AG04449 (cell line): ENCODE measurements at regions of chr12 and their contacts with region 1.

Region 1: DNA sequence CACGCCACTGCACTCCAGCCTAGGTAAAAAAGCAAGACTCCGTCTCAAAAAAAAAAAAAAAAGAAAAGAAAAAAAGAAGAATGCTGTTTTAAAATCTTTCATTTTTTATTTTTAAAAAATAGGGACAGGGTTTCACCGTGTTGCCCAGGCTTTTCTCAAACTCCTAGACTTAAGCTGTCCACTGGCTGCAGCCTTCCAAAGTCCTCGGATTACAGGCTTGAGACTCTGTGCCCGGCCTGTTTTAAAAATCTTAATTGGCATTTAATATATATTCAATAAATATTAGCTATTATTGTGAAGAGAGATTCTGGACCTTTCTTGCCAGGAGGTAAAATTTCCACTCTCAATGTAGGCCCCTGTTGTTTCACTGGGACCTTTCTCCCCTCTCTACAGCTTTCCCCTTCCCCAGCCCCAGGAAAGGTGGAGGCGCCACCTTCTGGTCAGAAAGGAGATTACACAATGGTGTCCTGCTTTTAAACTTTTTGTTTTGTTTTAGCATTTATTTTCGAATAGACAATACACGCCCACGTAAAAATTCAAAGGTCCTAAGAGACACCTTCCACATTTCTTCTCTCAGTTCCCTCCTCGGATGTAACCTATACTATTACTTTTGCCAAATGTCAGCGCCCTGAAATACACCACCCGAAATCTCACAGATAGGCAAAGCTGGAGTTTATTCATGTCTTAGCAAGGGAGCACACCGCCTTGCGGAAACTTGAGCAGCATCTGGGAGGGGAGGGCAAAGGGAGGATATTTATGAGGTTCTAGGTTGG is 23.8 kb upstream of the PHC1 start:
- DNase-seq: no peak
- H3K4me3 ChIP-seq: peak overlapping the region; percentile 51
- CTCF ChIP-seq: peak; percentile 80

Region 2: DNA sequence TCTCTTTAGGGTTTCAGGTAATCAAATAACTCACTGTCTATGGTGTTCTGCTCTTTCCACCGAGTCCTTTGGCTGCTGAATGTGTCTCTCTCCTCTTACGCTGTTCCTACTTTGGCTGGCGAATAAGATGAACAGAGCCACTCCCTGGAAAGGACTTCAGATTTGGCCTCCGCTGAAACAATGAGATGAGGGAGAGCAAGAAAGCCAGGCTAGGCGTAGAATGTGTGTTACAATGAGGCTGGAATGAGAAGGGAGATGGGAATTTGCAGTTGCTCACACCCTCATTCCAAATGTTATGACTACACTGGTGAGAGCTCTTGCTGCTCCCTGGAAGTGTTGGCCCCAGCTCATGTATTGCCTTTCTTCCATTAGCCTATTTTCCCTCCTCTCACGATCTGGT is 227.9 kb before region 1 on chr12 and contains the start of gene MFAP5:
- CTCF ChIA-PET with region 1: interaction called, 97 read pairs
- POLR2A ChIA-PET with region 1: no interaction called
- DNase-seq: peak; percentile 38
- H3K4me3 ChIP-seq: peak within 1 kb of the TSS; percentile 18
- CTCF ChIP-seq: no peak

Region 3: DNA sequence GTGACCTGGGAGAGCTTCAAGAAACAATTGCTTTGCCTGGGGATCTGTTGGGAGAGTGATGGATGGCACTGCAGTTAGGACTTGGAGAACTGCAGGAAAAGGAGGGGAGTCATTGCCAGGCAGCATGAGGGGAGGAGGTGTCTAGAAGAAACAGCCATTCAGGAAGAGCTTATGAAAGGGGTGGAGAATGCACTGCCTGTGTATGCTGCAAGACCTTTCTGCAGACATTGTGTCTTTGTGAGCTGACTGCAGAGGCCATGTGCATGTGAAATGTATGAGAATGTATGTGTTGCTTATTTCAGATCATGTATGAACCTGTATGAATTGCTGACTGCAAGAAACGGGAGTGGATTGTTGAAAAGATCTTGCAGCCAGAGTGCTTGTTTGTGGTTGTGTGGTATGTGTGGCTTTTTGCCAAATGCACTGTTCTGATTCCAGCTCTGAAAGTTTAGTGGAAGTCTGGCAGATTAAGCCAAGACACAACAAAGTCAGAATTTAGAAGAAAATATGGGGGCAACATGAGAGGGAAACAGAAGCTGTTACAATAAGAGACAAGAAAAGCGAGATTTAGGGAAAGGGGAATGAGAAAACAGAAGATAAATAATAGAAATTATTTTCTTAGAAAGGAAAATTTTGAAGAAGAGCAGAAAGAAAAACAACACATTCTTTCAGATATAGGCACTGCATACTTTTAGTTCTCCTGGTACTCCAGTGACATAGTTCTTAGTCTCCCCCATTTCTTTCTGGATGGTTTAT is 202.5 kb before region 1 on chr12:
- CTCF ChIA-PET with region 1: interaction called, 75 read pairs
- POLR2A ChIA-PET with region 1: no interaction called
- DNase-seq: no peak
- H3K4me3 ChIP-seq: peak overlapping the region; percentile 24
- CTCF ChIP-seq: no peak

Region 4: DNA sequence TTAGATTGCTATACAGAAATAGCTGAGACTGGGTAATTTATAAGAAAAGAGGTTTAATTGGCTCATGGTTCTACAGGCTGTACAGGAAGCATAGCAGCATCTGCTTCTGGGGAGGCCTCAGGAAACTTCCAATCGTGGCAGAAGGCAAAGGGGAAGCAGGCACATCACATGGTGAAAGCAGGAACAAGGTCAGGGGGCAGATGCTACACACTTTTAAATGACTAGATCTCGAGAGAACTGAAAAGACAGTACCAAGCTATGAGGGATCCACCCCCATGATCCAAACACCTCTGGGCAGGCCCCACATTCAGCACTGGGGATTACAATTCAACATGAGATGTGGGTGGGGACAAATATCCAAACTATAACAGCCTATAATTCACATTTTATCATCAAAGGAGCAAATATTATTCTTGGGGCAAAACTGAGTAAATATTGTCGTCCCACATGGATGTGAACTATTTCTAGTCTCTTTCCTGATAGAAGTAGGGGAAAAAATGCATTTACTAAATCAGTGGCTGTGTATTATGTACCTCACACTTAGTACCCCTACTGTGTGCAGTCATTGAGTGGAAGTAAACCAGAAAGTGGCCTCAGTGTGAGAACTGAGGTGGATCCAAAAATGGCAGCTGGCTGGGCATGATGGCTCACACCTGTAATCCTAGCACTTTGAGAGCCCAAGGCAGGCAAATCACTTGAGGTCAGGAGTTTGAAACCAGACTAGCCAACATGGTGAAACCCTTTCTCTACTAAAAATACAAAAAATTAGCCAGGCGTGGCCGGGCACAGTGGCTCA is 93.5 kb before region 1 on chr12:
- CTCF ChIA-PET with region 1: no interaction called
- POLR2A ChIA-PET with region 1: no interaction called
- DNase-seq: no peak
- H3K4me3 ChIP-seq: no peak overlapping the region
- CTCF ChIP-seq: no peak

Region 5: GRCh38 chr12:8870586-8870985 is 19.9 kb before region 1 on chr12:
- CTCF ChIA-PET with region 1: interaction called, 24 read pairs
- POLR2A ChIA-PET with region 1: no interaction called
- DNase-seq: no peak
- H3K4me3 ChIP-seq: no peak overlapping the region
- CTCF ChIP-seq: no peak

Region 6: GRCh38 chr12:8905546-8905945 is 15.0 kb after region 1 on chr12:
- CTCF ChIA-PET with region 1: interaction called, 15 read pairs
- POLR2A ChIA-PET with region 1: no interaction called
- DNase-seq: no peak
- H3K4me3 ChIP-seq: no peak overlapping the region
- CTCF ChIP-seq: no peak

Region 7: DNA sequence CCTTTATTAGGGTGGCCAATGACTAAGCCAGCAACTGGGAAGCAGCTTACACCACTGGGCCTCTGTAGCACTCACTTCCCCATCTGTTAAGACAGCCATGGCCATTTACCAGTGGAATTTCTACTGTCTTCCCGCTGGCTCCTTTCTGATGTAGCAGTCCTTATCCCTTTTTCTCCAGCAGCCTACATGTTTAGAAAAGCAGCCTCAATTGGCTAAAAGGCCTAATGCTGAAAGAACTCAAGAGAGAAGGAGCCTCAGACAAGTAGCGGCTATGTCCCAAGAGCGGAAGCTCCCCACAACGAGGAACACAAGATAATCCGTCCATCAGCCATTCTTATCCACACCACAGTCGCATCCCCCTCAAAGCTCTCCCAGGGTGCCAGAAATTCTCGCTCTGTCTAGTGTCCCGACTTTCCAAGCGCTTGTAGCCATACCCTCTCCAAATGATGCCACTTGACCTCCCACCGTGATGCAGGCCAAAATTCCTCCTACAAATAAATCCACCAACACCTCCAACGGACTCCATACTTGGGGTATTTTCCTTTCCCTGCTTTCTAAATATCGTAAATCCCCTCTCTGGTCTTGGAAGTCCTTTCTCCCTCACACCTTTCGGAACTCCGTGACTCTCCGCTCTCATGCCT is 58.3 kb after region 1 on chr12:
- CTCF ChIA-PET with region 1: interaction called, 13 read pairs
- POLR2A ChIA-PET with region 1: no interaction called
- DNase-seq: no peak
- H3K4me3 ChIP-seq: peak overlapping the region; percentile 95
- CTCF ChIP-seq: no peak

Region 8: GRCh38 chr12:9096563-9097176 is 206.2 kb after region 1 on chr12:
- CTCF ChIA-PET with region 1: no interaction called
- POLR2A ChIA-PET with region 1: no interaction called
- DNase-seq: no peak
- H3K4me3 ChIP-seq: no peak overlapping the region
- CTCF ChIP-seq: no peak

Region 9: GRCh38 chr12:9134981-9135628 is 244.6 kb after region 1 on chr12:
- CTCF ChIA-PET with region 1: no interaction called
- POLR2A ChIA-PET with region 1: no interaction called
- DNase-seq: no peak
- H3K4me3 ChIP-seq: no peak overlapping the region
- CTCF ChIP-seq: no peak

Region 10: GRCh38 chr12:9347328-9348127 is 457.0 kb after region 1 on chr12:
- CTCF ChIA-PET with region 1: no interaction called
- POLR2A ChIA-PET with region 1: no interaction called
- DNase-seq: no peak
- H3K4me3 ChIP-seq: no peak overlapping the region
- CTCF ChIP-seq: no peak